PC-9 (cell line): ENCODE measurements at regions of chr3 and their contacts with region 1.

Region 1: DNA sequence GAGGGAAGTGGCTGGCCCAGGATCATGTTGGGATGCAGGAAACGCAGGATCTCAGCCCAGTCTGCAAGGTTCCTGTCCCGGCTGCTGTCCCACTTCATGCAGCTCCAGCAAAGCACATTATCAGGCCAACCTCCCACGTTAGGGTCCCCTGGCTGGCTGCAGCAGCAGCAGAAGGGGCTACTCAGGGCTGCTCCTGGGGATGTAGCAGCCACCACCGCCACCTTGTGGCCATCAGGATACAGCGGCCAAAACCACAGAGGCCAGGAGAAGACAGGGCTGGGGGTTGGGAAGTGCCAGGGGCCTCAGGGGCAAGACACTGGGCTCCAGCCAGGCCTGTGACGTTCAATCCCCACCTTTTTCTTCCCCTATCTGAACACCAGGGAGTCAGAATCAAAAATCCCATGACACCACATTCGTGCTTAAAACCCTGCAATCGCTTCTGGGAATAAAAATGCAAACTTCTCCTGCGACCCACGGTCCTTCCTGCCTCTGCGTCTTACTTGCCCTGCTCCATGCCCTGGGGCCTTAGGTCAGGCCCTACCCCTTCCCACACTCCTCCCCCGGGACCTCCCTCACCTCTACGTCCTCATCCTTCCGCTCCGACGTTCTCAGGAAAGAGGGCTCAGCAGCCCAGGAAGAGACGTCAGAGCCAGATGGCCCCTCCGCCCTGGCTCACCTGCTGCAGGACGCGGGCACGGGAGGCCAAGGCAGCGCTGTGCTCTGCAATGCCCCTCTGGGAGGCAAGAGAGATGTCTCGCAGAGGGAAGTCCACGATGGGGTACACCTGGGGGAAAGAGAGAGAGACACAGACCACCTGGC is 21.5 kb downstream of the SSUH2 start:
- DNase-seq: peak in 1 of 2 experiments; percentile 74
- H3K4me3 ChIP-seq: no peak overlapping the region
- H3K27ac ChIP-seq: no peak overlapping the region
- H3K4me1 ChIP-seq: peaks cover 25% of the 10 kb centered on the region
- H3K27me3 ChIP-seq: no peaks in the 10 kb centered on the region
- CTCF ChIP-seq: peak; percentile 98

Region 2: GRCh38 chr3:8441969-8442559 is 181.0 kb before region 1 on chr3:
- CTCF ChIA-PET with region 1: interaction called, 4 read pairs
- POLR2A ChIA-PET with region 1: interaction called, 5 read pairs
- intact Hi-C with region 1: loop called (anchors 1 kb)
- DNase-seq: peak in 1 of 2 experiments; percentile 8
- H3K4me3 ChIP-seq: no peak overlapping the region
- H3K27ac ChIP-seq: no peak overlapping the region
- H3K4me1 ChIP-seq: peaks cover 25% of the 10 kb centered on the region
- H3K27me3 ChIP-seq: no peaks in the 10 kb centered on the region
- CTCF ChIP-seq: peak; percentile 84

Region 3: GRCh38 chr3:8730656-8731055 is 107.6 kb after region 1 on chr3:
- CTCF ChIA-PET with region 1: interaction called, 21 read pairs
- POLR2A ChIA-PET with region 1: no interaction called
- intact Hi-C with region 1: no loop called
- DNase-seq: no peak
- H3K4me3 ChIP-seq: no peak overlapping the region
- H3K27ac ChIP-seq: no peak overlapping the region
- H3K4me1 ChIP-seq: peaks cover 30% of the 10 kb centered on the region
- H3K27me3 ChIP-seq: no peaks in the 10 kb centered on the region
- CTCF ChIP-seq: no peak

Region 4: DNA sequence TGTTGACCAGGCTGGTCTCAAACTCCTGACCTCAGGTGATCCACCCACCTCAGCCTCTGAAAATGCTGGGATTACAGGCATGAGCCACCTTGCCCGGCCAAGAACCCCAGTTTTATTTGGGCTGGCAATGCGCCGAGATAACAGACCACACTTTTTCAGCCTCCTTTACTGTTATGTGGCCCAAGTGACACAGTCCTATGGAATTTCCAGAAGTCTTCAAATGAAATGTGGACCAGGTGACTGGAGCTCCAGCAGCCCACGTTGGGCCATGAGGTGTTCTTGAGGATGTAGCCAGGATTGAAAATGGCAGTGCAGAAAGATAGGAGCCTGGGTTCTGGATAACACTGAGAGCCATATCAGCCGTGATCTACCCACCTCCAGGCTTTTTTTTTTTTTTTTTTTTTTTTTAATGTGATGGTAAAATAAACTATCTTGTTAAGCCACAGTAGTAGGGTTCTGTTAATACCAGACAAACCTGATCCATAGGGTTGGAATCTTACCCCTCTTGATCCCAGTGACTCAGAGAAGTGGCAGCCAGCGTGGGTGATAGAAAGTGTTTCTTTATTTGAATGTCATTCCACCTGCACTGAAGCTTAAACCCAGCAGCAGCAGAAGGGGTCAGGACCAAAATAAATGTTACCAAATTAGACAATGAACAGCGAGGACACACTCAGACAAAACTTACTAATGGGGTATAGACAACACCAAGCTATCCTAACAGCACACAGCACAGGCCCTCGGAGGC is 874.9 kb after region 1 on chr3:
- CTCF ChIA-PET with region 1: interaction called, 12 read pairs
- POLR2A ChIA-PET with region 1: no interaction called
- intact Hi-C with region 1: no loop called
- DNase-seq: peak; percentile 49 to 70
- H3K4me3 ChIP-seq: no peak overlapping the region
- H3K27ac ChIP-seq: no peak overlapping the region
- H3K4me1 ChIP-seq: peaks cover 21% of the 10 kb centered on the region
- H3K27me3 ChIP-seq: no peaks in the 10 kb centered on the region
- CTCF ChIP-seq: no peak